Activated CD4-positive, alpha-beta T cell treated with anti-CD3 and anti-CD28 coated beads for 36 hours (primary cell): ENCODE measurements at regions of chr12 and their contacts with region 1.

Region 1: GRCh38 chr12:89709157-89709994 is 738 bp upstream of the ATP2B1 start:
- DNase-seq: peak; percentile 99
- ATAC-seq: peak; percentile 81
- H3K4me3 Mint-ChIP-seq: peak overlapping the region; percentile 79
- H3K27ac Mint-ChIP-seq: peak overlapping the region; percentile 84
- H3K4me1 Mint-ChIP-seq: peaks cover 30% of the 10 kb centered on the region
- H3K27me3 Mint-ChIP-seq: no peaks in the 10 kb centered on the region

Region 2: GRCh38 chr12:89470741-89471509 is 238.5 kb before region 1 on chr12:
- CTCF ChIA-PET with region 1: no interaction called
- POLR2A ChIA-PET with region 1: no interaction called
- intact Hi-C with region 1: loop called in 1 of 2 experiments (anchors 5 kb)
- DNase-seq: peak; percentile 14
- ATAC-seq: peak; percentile 57
- H3K4me3 Mint-ChIP-seq: no peak overlapping the region
- H3K27ac Mint-ChIP-seq: peak overlapping the region; percentile 69
- H3K4me1 Mint-ChIP-seq: peaks cover 57% of the 10 kb centered on the region
- H3K27me3 Mint-ChIP-seq: no peaks in the 10 kb centered on the region

Region 3: GRCh38 chr12:89542912-89543592 is 166.3 kb before region 1 on chr12:
- CTCF ChIA-PET with region 1: interaction called, 5 read pairs
- POLR2A ChIA-PET with region 1: no interaction called
- intact Hi-C with region 1: loop called in 1 of 2 experiments (anchors 1 kb)
- DNase-seq: peak; percentile 77
- ATAC-seq: peak; percentile 87
- H3K4me3 Mint-ChIP-seq: no peak overlapping the region
- H3K27ac Mint-ChIP-seq: no peak overlapping the region
- H3K4me1 Mint-ChIP-seq: peaks cover 4% of the 10 kb centered on the region
- H3K27me3 Mint-ChIP-seq: peaks cover 3% of the 10 kb centered on the region

Region 4: DNA sequence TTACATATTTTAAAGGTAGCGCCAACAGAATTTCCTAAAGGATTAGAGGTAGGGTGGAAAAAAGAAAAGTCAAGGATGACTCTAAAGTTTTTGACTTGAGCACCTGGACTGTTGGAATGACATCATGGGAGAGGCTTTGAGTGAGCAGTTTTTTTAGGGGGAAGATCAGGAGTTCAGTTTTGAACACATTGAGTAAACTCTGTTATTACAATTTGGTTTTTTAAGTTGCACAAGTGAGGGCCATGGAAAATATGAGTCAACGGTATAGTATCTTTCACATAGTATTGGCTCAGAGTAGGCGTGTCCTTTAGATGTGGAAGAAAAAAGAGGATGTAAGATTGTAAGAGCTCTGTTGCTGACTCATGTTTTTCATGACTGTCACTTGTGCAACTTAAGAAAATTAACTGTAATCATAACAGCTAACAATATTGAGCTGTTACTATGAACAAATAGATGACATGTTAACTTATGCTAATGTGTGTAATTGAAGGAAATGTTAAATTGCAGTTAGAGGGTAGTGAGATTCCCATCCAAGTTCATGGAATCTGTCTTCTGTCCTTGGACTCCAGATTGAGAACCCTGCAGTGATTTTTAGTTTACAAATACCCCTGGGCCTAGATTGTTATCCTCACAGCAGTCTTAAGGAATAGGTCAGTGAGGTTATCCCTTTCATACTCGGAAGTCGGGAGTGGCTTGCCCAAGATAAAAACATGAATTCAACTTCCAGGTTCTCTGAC is 47.4 kb after region 1 on chr12:
- CTCF ChIA-PET with region 1: no interaction called
- POLR2A ChIA-PET with region 1: no interaction called
- intact Hi-C with region 1: loop called (anchors 1 kb)
- DNase-seq: peak; percentile 28
- ATAC-seq: peak; percentile 94
- H3K4me3 Mint-ChIP-seq: peak overlapping the region; percentile 22
- H3K27ac Mint-ChIP-seq: peak overlapping the region; percentile 72
- H3K4me1 Mint-ChIP-seq: peaks cover 37% of the 10 kb centered on the region
- H3K27me3 Mint-ChIP-seq: no peaks in the 10 kb centered on the region

Region 5: DNA sequence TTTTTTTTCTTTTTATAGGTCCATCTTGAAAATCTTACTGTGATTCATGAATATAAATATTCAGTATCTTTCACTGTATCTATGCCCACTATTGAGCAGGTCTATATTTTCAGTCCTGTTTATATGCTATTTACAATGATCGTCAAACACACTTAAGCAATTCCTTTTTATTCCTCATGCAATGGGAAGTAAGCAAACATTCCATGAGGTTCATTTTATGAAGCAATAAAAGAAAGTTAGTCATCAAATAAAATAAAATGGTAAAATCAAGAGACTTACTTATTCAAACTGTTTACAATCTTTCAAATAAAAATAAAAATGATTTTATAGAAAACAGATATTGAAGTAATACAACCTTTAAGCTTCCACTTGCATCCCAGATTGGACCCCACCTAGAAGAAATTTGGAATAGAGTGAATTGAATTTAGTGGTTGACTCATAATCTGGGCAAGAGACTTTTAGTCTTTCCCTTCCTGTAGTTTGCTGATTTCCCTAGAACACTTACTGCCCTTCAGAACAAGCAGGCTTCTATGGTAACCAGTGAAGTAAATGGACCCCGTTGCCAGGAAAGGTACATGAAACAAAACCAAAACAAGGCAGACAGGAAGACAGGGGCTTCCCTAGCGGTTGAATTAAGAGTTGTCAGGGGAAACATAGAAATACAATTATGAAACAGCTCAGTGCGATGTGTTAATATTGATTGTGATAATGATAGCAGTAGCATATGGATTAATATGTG is 240.2 kb after region 1 on chr12:
- CTCF ChIA-PET with region 1: no interaction called
- POLR2A ChIA-PET with region 1: no interaction called
- intact Hi-C with region 1: loop called (anchors 1 to 2 kb)
- DNase-seq: peak; percentile 51
- ATAC-seq: peak; percentile 82
- H3K4me3 Mint-ChIP-seq: no peak overlapping the region
- H3K27ac Mint-ChIP-seq: peak overlapping the region; percentile 64
- H3K4me1 Mint-ChIP-seq: peaks cover 50% of the 10 kb centered on the region
- H3K27me3 Mint-ChIP-seq: no peaks in the 10 kb centered on the region